ENCODE measurements at regions of chr12 and their contacts with region 1.

Region 1: DNA sequence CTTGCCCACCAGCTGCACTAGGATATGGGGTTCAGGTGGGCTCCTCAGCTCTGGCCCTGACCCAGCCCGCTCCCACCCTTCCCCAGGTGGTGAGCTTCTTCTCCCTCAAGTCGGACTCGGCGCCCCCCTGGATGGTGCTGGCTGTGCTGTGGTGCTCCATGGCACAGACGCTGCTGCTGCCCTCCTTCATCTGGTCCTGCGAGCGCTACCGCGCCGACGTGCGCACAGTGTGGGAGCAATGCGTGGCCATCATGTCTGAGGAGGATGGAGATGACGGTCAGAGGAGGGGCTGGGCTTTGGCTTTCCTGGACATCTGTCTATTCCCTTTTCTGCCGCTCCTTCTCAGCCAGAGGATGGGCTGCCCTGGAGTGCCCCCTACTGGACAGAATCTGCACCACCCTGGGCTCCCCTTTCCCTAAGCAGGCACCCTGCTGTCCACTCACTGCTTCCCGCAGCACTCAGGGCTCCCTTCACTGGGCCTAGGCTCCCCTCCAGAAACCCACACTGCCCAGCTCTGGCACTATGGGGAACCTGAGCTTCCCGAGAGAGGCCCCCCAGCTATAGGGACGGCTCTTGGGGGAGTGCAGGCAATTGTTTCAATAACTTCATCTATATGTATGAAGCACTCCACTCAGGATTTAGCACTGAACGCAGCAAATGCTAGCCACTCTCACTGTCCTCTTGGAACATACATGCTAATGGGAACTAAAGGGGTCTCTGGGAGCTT is 2.6 kb upstream of the P3H3 start:
- DNase-seq: peak; percentile 76 to 92 (median 91)
- ATAC-seq: peak; percentile 80
- H3K4me3 ChIP-seq: no peak overlapping the region
- H3K4me1 ChIP-seq: peaks cover 6% of the 10 kb centered on the region
- CTCF ChIP-seq: peak; percentile 93

Region 2: DNA sequence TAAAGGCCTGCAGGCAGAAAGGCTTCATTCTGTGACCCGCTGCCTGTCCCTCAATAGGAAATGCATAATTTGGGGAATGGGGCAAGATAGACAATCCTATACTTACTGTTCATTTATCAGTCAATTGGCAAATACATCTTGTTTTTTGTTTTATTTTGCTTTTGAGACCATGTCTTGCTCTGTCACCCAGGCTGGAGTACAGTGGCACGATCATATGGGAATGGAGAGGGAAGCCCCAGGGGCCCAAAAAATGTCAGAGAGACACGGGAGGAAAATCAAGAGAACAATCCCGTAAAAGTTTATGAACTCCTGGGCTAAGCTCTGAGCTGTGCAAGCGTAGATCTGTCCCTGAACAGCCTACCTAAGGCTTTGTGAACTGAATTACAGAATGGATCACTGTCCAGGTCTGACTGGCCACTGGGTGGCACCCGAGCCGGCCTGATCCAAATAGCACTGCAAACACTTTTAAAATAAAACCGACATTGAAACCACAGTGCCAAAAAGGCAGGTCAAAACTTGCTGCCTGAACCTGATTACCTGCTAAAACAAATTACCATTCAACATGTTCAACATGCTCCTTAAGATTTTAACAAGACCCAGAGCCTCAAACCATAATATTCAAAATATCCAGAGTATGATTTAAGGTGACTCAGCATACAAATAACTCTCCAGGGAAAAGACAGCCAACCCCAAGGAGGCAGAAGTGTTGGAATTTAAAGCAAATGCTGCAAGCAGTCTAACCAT is 89.9 kb before region 1 on chr12:
- intact Hi-C with region 1: loop called in 1 of 2 experiments (anchors 10 kb)
- DNase-seq: peak in 2 of 3 donors; percentile 72 to 82
- ATAC-seq: peak; percentile 92
- H3K4me3 ChIP-seq: no peak overlapping the region
- H3K4me1 ChIP-seq: no peaks in the 10 kb centered on the region
- CTCF ChIP-seq: peak; percentile 32

Region 3: DNA sequence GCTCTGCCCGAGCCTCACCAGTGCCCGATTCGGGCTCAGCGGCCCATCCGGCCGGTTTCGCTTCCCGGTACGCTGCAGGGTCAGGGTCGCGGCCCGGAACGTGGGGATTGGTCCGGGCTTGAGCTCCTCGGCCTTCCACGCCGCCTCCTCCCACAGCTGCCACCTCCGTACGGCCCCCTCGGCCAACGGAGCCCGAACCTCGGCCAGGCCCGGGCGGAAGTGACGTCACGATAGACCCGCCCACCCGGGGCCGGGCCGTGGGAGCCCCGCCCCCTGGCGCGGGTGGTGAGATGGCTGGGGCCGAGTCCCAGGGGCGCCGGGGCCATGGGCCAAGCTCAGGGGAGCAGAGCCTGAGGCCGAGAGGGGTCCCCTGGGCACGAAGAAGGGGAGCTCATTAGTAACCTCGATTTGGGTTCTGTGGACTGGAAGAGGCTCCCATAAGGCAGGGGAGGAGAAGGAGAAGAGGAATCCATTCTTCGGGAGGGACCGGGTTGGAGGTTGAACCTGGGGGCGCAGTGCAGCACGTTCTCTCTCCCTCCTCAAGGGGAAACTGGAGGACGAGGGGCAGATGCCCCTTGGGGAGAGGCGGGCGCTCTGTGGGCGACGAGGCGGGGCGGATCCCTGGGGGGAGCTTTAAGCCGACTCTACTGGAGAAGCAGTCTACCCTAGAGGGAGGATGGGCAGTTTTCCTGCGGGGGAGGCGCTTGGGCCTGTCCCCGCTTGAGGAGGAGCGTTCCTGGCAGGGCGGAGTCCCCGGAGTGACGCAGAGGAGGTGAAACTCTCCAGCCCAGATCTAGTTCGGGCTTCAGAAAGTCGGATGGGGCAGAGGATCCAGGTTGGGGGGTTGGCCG is 72.4 kb before region 1 on chr12 and contains the start of gene MLF2:
- intact Hi-C with region 1: loop called in 1 of 2 experiments (anchors 5 kb)
- DNase-seq: peak; percentile 99
- ATAC-seq: peak; percentile 96
- H3K4me3 ChIP-seq: peak within 1 kb of the TSS; percentile 58
- H3K4me1 ChIP-seq: peaks cover 7% of the 10 kb centered on the region
- CTCF ChIP-seq: peak; percentile 91
- total RNA-seq, gene MLF2: 136 to 177 (median 149) TPM

Measured in mucosa of descending colon (tissue), 3 donors.